ENCODE measurements at regions of chr4 and their contacts with region 1.

Region 1: DNA sequence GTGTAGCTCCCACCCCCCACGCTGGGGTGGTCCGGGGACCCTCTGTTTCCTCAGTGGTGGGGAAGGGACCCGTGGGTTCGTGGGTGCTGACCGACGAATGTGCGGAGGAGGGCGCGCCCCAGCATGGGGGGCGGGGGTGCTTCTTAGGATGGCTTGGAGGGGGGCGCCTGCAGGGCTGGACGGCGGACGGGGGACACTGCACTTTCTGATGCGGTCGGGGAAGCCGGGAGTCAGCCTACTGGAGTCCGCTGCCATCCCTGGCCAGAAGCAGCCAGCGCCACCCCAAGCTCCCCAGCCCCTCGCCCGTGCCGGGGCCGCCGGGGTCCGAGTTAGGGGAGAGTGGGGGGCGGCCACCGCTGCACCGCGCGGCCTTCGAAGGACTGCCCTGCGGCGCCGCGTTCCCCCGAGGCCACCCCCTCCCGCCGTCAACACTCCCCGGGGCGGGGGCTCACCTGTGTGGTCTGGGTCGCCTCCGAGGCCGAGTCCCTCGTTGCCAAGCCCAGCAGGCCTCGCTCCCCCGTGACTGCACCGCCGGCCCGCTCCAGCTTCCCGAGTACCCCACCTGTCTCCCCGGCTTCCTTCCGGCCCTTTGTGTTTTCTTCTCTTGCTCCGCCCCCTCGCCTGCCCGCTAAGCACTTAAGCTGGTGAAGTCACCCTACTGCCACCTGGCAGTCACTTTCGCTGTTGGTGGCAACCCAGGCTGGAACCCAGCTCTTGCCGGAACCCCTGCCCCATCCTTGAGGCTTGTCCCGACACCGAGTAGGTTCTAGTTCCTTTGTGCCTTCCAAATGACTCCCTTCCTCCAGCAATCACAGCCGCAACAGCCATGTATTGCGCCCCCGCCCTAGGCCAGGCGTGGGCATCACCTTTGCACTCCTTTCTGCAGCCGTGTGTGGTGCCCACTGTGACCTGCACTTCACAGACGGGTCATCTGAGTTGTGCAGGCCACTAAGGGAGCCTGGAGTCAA is at the start of gene OCIAD2:
- DNase-seq: peak; percentile 90
- H3K4me3 Mint-ChIP-seq: peak within 1 kb of the TSS; percentile 89
- H3K27ac Mint-ChIP-seq: peak within 1 kb of the TSS; percentile 90
- H3K4me1 Mint-ChIP-seq: peaks cover 56% of the 10 kb centered on the region
- H3K27me3 Mint-ChIP-seq: no peaks in the 10 kb centered on the region
- total RNA-seq, gene OCIAD2: 59.7 to 76.9 TPM

Region 2: DNA sequence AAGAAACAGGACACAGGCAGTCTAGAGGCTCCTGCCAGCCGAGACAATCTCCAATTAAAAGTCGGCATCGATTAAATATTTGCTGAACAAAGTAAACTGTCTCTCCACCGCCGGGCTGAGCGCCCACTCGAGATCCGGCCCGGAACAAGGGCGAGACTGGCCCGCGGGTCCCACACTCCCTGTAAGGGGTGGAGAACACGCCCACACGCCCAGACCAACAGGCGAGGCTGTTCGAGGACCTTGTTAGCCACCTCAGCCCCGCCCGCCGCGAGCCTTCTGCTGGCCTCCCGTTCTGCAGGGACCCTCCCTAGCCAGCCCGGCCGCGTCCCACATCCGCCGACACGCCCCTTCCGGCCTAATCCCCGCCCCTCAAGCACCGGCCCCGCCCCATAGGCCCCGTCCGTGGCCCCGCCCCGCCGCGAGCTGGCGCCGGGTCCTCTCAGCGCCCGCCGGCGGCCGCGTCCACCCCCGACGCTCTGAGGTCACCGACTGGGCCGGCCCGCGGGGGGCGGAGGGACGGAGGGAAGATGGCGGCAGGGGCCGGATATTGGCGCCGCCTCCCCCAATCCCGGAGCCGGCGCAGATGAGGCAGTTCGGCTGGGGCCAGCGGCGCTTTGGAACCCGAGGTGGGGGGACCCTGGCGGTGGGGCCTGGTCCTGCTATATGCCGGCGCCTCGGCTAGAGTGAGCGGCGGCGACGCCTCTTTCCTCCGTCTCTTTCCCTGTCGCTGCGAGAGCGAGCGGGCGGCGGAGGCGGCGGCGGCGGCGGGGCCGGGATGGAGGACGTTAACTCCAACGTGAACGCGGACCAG is 565.3 kb before region 1 on chr4 and contains the start of gene SLAIN2:
- CTCF ChIA-PET with region 1: no interaction called
- intact Hi-C with region 1: loop called (anchors 1 kb)
- DNase-seq: peak; percentile 98
- H3K4me3 Mint-ChIP-seq: peak within 1 kb of the TSS; percentile 97
- H3K27ac Mint-ChIP-seq: peak within 1 kb of the TSS; percentile 97
- H3K4me1 Mint-ChIP-seq: peaks cover 62% of the 10 kb centered on the region
- H3K27me3 Mint-ChIP-seq: no peaks in the 10 kb centered on the region
- total RNA-seq, gene SLAIN2: 39.7 to 42.6 TPM

Region 3: GRCh38 chr4:48483006-48483776 is 423.3 kb before region 1 on chr4 and contains the start of gene SLC10A4:
- CTCF ChIA-PET with region 1: no interaction called
- intact Hi-C with region 1: no loop called
- DNase-seq: no peak
- H3K4me3 Mint-ChIP-seq: peak within 1 kb of the TSS; percentile 57
- H3K27ac Mint-ChIP-seq: no peak within 1 kb of the TSS
- H3K4me1 Mint-ChIP-seq: peaks cover 11% of the 10 kb centered on the region
- H3K27me3 Mint-ChIP-seq: peaks cover 63% of the 10 kb centered on the region
- total RNA-seq, gene SLC10A4: not detected

Region 4: GRCh38 chr4:48578132-48578968 is 328.1 kb before region 1 on chr4:
- CTCF ChIA-PET with region 1: interaction called, 6 read pairs
- intact Hi-C with region 1: loop called (anchors 1 kb)
- DNase-seq: peak; percentile 72
- H3K4me3 Mint-ChIP-seq: no peak overlapping the region
- H3K27ac Mint-ChIP-seq: no peak overlapping the region
- H3K4me1 Mint-ChIP-seq: peaks cover 7% of the 10 kb centered on the region
- H3K27me3 Mint-ChIP-seq: no peaks in the 10 kb centered on the region

Region 5: DNA sequence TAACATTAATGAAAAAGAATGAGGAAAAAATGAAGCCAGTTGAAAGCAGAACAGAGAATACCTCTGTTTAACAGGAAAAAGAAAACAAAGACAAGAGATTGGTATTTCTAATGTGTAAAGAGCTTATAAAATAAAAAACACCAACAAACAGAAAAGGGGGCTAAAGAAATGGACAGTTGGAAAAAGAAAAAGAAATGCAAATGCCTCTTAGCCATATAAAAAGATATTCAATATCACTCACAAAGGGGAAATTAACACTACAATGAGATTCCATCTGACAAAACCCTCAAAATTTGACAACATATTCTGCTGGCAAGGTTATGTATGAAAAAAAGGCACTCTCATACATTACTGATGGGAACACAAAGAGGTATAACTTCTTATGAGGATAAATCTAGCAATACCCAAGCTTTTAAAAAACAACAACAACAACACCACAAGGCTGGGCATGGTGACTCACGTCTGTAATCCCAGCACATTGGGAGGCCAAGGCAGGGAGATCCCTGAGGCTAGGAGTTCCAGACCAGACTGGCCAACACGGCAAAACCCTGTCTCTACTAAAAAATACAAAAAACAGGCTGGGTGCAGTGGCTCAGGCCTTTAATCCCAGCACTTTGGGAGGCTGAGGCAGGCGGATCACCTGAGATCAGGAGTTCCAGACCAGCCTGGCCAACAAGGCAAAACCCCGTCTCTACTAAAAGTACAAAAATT is 202.2 kb before region 1 on chr4:
- CTCF ChIA-PET with region 1: interaction called, 4 read pairs
- intact Hi-C with region 1: loop called (anchors 5 kb)
- DNase-seq: no peak
- H3K4me3 Mint-ChIP-seq: no peak overlapping the region
- H3K27ac Mint-ChIP-seq: no peak overlapping the region
- H3K4me1 Mint-ChIP-seq: peaks cover 37% of the 10 kb centered on the region
- H3K27me3 Mint-ChIP-seq: no peaks in the 10 kb centered on the region

Region 6: GRCh38 chr4:48851651-48852050 is 54.8 kb before region 1 on chr4:
- CTCF ChIA-PET with region 1: no interaction called
- intact Hi-C with region 1: loop called (anchors 2 kb)
- DNase-seq: no peak
- H3K4me3 Mint-ChIP-seq: no peak overlapping the region
- H3K27ac Mint-ChIP-seq: peak overlapping the region; percentile 10
- H3K4me1 Mint-ChIP-seq: peaks cover 28% of the 10 kb centered on the region
- H3K27me3 Mint-ChIP-seq: no peaks in the 10 kb centered on the region

Measured in activated naive CD4-positive, alpha-beta T cell treated with anti-CD3 and anti-CD28 coated beads for 36 hours (primary cell).